Heart left ventricle (tissue), 16 donors: ENCODE measurements at regions of chr2 and their contacts with region 1.

Region 1: DNA sequence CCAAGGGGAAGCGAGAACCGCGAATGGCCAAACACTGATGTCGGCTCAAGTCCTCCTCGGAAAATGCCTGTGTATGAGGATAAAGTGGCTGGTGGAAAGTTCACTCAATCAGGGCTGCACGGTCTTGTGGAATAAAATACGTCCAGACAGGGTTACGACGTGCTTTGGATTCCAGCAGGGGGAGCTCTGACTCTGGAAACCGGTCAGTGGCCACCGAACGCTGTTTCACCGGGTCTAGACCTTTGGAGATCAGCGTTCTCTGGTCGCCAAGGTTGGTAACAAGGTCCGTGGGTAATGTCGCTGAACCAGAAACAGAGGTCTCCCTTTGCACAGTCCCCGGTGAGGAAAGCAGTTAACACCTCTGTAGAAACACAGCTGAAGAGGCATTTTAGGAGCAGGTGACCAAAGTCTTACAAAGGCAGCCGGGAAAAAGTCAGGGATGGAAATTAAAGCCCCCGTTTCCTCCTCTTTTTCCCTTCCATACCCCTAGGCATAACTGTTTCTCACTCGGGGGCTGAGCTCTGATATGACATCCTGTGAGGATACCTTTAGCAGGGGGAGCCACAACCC is 47.8 kb downstream of the CDCA7 start:
- DNase-seq: peak; percentile 79 to 86 (median 81)
- ATAC-seq: peak; percentile 90 to 98 (median 96)
- H3K4me3 ChIP-seq: peak overlapping the region in 9 of 12 donors; percentile 21 to 41 (median 31)
- H3K27ac ChIP-seq: no peak overlapping the region
- H3K4me1 ChIP-seq: peaks cover 0 to 13% (median 0%) of the 10 kb centered on the region in 12 donors
- H3K27me3 ChIP-seq: peaks cover 0 to 57% (median 8%) of the 10 kb centered on the region in 9 donors
- CTCF ChIP-seq: peak; percentile 64 to 88 (median 83)
- POLR2A ChIP-seq: no peak

Region 2: DNA sequence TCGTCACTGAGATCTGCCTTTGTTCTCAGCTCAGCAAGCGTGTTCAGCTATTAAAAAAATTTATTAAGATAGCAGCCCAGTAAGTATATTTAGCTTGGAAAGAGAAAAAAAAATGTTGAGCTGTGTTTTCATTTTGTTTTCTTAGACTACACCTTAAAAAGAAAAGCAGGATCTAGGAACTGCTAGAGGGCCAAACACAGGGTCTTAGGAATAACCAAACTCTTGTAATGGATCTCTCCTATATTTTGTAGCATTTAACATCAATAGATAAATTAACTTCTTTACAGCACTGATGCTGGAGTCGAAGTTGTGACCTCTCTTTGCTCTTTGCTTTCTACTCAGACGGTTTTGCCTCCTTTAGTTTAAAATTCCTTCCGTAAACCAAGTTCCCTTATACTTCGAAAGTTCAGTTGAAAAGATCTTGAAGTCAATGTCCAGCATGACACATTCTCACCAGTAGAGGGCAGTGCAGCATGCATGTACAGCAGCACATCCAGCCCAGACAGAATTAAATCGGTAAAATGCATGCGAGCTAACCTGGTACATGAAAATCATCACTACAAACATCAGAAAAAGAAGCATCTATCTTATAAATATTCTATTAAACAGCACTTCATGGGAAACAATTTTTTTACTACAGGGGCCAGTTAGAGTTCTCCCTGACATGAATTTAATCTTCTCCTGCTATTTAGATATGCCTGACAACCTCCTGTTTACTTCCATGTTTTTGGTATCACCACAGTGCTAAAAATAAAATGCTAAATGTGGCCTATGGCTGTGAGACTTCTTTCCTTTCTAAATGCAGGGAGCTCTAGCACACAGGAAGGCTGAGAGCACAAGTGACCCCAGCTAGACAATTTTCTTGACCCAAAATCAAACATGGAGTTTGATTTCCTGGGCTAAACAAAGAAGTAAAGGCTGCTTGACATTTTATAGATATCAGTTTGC is 375.0 kb before region 1 on chr2:
- intact Hi-C with region 1: loop called in 1 of 10 experiments (anchors 10 kb)
- DNase-seq: peak in 4 of 5 donors; percentile 79 to 89 (median 86)
- ATAC-seq: peak; percentile 77 to 88 (median 82)
- H3K4me3 ChIP-seq: peak overlapping the region in 1 of 12 donors; percentile 7
- H3K27ac ChIP-seq: peak overlapping the region; percentile 68 to 93 (median 86)
- H3K4me1 ChIP-seq: peaks cover 0 to 41% (median 25%) of the 10 kb centered on the region in 12 donors
- H3K27me3 ChIP-seq: no peaks in the 10 kb centered on the region
- CTCF ChIP-seq: peak; percentile 91 to 98 (median 96)
- POLR2A ChIP-seq: no peak

Region 3: GRCh38 chr2:173462892-173463840 is 60.7 kb after region 1 on chr2:
- intact Hi-C with region 1: no loop called
- DNase-seq: no peak
- ATAC-seq: no peak
- H3K4me3 ChIP-seq: no peak overlapping the region
- H3K27ac ChIP-seq: no peak overlapping the region
- H3K4me1 ChIP-seq: no peaks in the 10 kb centered on the region
- H3K27me3 ChIP-seq: peaks cover 0 to 14% (median 0%) of the 10 kb centered on the region in 9 donors
- CTCF ChIP-seq: no peak
- POLR2A ChIP-seq: no peak

Region 4: GRCh38 chr2:173571021-173571882 is 168.8 kb after region 1 on chr2:
- intact Hi-C with region 1: loop called in 9 of 10 experiments (anchors 5 to 10 kb)
- DNase-seq: no peak
- ATAC-seq: peak in 3 of 4 donors; percentile 31 to 48 (median 42)
- H3K4me3 ChIP-seq: peak overlapping the region in 1 of 12 donors; percentile 5
- H3K27ac ChIP-seq: no peak overlapping the region
- H3K4me1 ChIP-seq: peaks cover 0 to 10% (median 0%) of the 10 kb centered on the region in 12 donors
- H3K27me3 ChIP-seq: peaks cover 0 to 6% (median 0%) of the 10 kb centered on the region in 9 donors
- CTCF ChIP-seq: peak in 10 of 12 donors; percentile 13 to 51 (median 37)
- POLR2A ChIP-seq: no peak

Region 5: DNA sequence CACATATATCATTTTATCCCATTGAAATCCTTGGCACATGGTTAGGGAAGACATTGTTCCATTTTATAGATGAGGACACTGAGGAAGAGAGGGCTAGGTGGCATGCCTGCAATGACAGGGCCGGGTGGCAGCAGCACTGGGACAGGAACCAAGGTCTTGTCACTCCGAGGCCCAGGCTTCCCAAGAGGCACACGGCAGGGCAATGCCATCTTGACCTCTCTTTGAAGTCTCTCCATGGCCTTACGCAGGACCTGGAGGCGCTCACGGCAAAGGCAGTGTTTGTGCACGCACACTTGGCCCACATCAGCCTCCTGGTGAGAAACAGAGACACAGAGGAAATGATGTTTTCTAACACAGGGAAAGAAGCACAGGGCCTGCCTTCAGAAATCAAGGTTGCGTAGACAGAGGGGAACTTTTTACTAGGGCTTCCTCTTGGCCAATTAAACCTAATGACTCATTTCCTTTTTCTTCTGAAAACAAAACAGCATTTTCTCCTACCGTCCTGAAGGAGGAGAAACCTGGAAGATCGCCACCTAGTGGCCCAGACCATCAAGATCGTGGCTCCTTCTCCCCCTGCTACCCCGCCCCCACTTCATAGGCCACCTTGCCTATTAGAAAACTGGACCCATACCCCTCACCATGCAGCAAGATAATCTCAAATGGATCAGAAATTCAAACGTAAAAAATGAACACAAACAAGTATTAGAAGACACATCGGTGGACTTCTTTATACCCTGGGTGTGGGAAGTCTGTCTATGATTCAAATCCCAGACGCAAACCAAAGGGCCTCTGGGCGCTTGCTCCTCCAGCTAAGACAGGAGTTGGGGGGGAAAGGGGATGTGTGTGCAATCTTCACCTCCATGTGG is 637.3 kb after region 1 on chr2:
- intact Hi-C with region 1: loop called in 3 of 10 experiments (anchors 10 kb)
- DNase-seq: peak; percentile 86 to 93 (median 89)
- ATAC-seq: peak; percentile 75 to 90 (median 86)
- H3K4me3 ChIP-seq: peak overlapping the region in 7 of 12 donors; percentile 6 to 20 (median 16)
- H3K27ac ChIP-seq: peak overlapping the region; percentile 57 to 97 (median 85)
- H3K4me1 ChIP-seq: peaks cover 0 to 48% (median 23%) of the 10 kb centered on the region in 12 donors
- H3K27me3 ChIP-seq: no peaks in the 10 kb centered on the region
- CTCF ChIP-seq: peak; percentile 81 to 94 (median 88)
- POLR2A ChIP-seq: no peak

Region 6: DNA sequence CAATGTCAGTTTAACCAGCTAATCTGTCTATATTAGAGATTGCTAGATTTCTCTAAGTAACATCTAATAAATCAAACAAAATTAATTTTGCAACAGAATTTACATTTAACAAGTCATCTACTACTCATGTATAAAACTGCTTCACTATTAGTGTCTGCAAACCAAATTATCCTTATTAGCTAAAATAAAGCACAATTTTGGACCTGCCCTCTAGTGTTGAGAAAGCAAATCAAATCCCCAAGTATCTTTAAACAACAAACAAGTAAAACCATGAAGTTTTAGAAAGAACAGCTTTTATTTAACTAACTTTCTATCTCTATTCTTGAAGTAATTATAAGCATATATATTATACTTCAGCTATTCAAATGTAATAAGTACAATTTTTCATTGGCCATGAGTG is 675.8 kb after region 1 on chr2:
- intact Hi-C with region 1: loop called in 1 of 10 experiments (anchors 10 kb)
- DNase-seq: no peak
- ATAC-seq: no peak
- H3K4me3 ChIP-seq: no peak overlapping the region
- H3K27ac ChIP-seq: no peak overlapping the region
- H3K4me1 ChIP-seq: no peaks in the 10 kb centered on the region
- H3K27me3 ChIP-seq: no peaks in the 10 kb centered on the region
- CTCF ChIP-seq: peak in 11 of 12 donors; percentile 12 to 61 (median 47)
- POLR2A ChIP-seq: no peak